Ovary (tissue), 10 donors: ENCODE measurements at regions of chr9 and their contacts with region 1.

Region 1: DNA sequence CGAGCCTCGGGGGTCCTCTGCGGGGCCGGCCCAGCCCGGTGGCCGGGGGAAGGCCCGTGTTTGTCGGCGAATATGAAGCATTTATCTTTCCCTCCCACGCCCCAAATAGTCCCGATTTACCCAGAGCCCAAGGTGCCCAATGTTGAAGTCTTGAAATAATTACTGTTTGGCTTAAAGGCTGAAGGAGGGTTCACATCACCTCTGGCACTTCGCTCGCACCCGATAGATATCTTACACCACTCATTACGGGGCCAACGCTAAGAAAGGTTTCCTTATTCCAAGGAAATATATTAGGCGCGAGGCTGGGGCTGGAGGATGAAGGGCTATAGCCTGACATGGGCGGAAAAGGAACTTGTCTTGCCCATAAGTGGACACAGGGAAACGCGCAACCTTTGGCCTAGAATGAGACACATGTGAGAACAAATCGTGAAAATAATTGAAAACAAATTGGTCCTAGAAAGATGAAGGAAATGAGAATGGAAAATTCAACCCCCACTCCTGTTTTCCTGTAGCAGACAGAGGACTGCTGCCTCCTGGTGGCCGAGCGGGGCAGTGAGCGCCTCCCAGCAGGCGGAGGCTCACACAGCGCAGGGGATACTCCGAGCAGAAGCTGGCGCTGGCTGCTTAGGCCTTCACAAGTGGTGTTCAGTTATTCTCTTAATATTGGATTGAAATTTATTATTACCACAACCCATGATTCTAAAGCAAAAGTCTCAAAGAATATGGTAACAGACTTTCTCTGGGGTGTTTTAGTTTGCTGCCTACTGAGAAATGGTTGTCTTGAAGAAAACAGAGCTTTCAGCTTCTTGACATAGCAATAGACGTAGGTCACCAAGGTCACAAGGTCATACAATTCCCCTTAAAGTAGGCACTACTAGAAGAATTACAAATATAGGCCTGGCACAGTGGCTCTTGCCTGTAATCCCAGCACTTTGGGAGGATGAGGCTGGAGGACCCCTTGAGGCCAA is 7.9 kb downstream of the CCL21 start:
- DNase-seq: peak; percentile 78 to 91 (median 88)
- H3K4me3 ChIP-seq: peak overlapping the region; percentile 76
- H3K27ac ChIP-seq: peak overlapping the region in 1 of 2 donors; percentile 49
- H3K4me1 ChIP-seq: no peaks in the 10 kb centered on the region
- H3K27me3 ChIP-seq: no peaks in the 10 kb centered on the region
- CTCF ChIP-seq: peak; percentile 88 to 93 (median 89)
- EP300 ChIP-seq: no peak
- POLR2A ChIP-seq: no peak

Region 2: GRCh38 chr9:34637356-34638137 is 64.5 kb before region 1 on chr9 and contains the start of gene SIGMAR1:
- intact Hi-C with region 1: loop called in 1 of 4 experiments (anchors 5 kb)
- DNase-seq: peak; percentile 93 to 96 (median 95)
- H3K4me3 ChIP-seq: peak within 1 kb of the TSS; percentile 65
- H3K27ac ChIP-seq: peak within 1 kb of the TSS; percentile 15 to 77
- H3K4me1 ChIP-seq: peaks cover 8% of the 10 kb centered on the region
- H3K27me3 ChIP-seq: no peaks in the 10 kb centered on the region
- CTCF ChIP-seq: no peak
- EP300 ChIP-seq: no peak
- POLR2A ChIP-seq: peak; percentile 81
- total RNA-seq, gene SIGMAR1: 47.2 to 73.9 (median 54.3) TPM

Region 3: DNA sequence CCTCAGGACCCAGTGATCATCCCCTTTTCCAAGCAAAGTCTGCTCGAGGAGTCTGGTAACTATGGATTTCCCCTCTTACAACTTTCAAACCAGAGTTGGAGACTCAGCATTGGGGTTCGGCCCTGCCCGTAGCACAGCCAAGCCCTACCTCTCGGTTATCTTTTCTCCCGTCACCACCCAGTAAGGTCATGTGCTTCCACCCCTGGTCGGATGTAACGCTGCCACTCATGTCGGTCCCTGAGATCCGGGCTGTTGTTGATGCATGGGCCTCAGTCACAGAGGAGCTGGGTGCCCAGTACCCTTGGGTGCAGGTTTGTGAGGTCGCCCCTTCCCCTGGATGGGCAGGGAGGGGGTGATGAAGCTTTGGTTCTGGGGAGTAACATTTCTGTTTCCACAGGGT is 54.4 kb before region 1 on chr9:
- intact Hi-C with region 1: no loop called
- DNase-seq: no peak
- H3K4me3 ChIP-seq: peak overlapping the region; percentile 82
- H3K27ac ChIP-seq: peak overlapping the region in 1 of 2 donors; percentile 54
- H3K4me1 ChIP-seq: peaks cover 24% of the 10 kb centered on the region
- H3K27me3 ChIP-seq: no peaks in the 10 kb centered on the region
- CTCF ChIP-seq: no peak
- EP300 ChIP-seq: no peak
- POLR2A ChIP-seq: no peak

Region 4: DNA sequence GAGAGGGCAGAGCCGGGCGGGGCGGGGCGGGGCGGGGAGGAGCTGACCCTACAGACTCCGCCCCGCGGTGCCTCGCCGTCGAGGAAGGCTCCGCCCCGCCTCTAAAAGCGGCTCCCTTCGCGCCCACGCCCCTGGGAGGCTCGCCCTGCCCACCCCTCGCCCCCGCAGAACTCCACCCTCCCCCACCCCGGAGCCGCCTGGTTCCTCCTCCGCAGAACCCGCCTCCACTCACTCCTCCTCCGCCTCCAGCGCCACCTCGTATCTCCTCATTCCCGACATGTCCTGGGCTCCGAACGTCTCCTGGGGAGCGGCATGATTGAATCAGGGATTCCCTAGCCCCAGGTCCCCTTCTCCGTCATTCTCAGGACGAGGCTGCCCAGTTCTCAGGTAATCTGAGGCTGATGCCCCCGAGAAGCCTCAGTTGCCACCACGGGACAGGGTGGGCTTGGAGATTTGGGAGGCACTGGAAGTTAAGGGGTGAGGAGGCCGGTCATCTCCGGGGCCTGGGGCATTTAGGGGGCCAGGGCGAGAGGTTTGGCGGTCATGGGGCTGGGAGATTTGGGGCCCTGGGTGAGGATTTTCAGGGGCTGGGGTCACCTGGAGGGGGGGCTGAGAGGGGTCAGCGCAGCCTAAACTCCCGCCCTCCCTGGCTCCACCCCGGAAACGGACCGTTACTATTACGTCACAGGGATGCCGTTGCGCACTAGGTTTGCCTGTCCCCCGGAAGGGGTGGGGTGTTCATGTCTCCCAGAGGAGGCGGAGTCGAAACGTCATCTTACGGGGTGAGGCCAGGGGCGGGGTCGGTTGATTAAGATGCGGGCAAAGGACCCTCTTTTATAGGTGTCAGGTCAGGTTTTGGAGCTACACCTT is 36.4 kb before region 1 on chr9:
- intact Hi-C with region 1: loop called in 1 of 4 experiments (anchors 2 kb)
- DNase-seq: peak; percentile 96 to 98 (median 98)
- H3K4me3 ChIP-seq: peak overlapping the region; percentile 81
- H3K27ac ChIP-seq: peak overlapping the region; percentile 94 to 98
- H3K4me1 ChIP-seq: peaks cover 4% of the 10 kb centered on the region
- H3K27me3 ChIP-seq: no peaks in the 10 kb centered on the region
- CTCF ChIP-seq: peak in 1 of 3 donors; percentile 45
- EP300 ChIP-seq: peak; percentile 40
- POLR2A ChIP-seq: peak; percentile 95

Region 5: DNA sequence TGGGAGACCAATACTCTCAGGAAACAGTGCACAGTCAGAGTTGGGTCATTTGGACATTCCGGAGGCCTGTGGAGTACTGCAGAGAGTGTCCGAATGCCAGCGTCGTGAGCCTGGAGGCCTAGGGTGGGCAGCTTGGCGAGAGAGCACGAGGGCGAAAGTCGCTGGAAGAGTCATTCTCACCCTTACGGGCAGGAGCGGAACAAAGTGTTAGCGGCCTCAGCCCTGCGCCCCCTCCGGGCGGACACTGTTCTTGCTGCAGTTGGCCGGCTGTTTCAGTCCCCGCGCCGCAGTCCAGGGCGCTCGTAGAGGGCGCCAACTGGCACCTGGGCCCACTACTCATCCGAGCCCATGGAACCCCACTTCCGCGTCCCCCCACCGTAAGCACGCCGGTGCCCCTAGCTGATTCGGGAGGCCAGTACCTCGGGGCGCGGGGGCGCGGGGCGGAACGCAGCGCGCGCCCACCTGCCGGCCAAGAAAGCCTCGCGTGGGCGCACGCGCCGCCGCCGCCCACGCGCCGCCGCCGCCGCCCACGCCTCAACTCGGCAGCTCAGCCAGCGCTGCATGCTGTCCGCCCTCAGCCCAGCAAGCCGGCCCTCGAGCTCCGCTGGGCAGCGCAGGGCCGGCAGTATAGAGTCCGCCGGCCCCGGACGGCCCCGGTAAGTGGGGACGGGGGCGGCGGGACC is 107.6 kb after region 1 on chr9:
- intact Hi-C with region 1: no loop called
- DNase-seq: no peak
- H3K4me3 ChIP-seq: no peak overlapping the region
- H3K27ac ChIP-seq: no peak overlapping the region
- H3K4me1 ChIP-seq: peaks cover 2% of the 10 kb centered on the region
- H3K27me3 ChIP-seq: no peaks in the 10 kb centered on the region
- CTCF ChIP-seq: no peak
- EP300 ChIP-seq: no peak
- POLR2A ChIP-seq: no peak